ENCODE measurements at regions of chrX and their contacts with region 1.

Region 1: DNA sequence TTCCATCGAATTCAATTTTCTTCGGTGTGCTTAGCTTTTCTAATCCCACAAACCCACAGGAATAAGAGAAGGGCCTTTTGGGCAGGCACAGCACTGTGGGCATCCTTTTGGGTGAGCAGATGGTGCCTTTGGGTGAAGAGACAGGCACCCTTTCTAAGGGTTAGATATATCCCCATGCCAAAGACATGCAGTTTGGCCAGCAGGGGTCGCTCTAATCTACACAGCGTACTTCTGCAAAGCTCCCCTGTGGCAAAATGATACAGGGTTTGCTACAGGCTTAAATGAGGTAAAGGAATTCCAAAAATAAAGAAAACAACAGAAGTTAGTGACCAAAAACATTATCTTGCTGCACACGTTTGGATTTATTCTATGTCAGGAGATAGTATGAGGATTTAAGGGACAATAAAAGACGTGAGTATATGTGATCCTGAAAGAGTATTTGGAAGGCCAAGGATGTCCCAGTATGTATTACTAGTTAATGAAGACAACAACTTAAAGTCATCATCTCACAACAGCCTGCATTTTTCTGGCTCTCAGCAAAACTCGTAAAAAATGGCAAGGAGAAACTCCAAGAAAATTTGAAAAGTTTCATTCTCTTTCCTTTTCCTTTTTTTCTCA is 49.5 kb downstream of the PHEX start:
- DNase-seq: peak; percentile 75
- ATAC-seq: peak; percentile 78
- H3K4me3 ChIP-seq: no peak overlapping the region
- H3K27ac ChIP-seq: no peak overlapping the region
- H3K4me1 ChIP-seq: no peaks in the 10 kb centered on the region
- H3K27me3 ChIP-seq: no peaks in the 10 kb centered on the region
- CTCF ChIP-seq: peak; percentile 88

Region 2: DNA sequence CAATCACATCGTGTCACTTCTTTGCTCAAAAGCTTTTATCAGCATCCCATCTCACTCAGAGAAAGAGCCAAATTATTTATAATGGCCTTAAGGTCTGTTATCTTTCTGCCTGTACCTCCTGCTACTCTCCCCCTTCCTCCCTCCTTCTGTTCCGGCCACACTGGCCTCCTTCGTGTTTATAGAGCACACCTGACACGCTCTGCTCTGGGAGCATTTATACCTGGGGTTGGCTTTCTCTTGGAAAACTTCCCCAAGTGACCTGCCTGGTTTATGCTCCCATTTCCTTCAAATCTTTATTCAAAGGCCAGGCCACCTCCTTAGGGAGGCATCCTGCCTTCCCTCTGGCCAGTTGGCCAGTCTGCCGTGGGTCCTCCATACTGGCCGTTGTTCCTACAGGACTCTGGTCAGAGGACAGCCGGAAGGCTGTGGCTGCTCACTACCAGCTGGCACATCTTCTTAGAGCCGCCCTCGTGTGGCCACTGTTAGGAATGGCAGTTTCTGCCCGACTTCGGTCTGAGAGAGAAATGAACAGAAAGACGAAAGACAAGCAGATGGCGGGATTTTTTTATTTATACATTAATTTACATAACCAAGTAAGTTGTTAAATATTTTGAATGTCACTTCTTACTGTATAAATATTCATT is 111.0 kb after region 1 on chrX:
- CTCF ChIA-PET with region 1: no interaction called
- POLR2A ChIA-PET with region 1: no interaction called
- intact Hi-C with region 1: loop called (anchors 5 kb)
- DNase-seq: peak; percentile 78
- ATAC-seq: peak; percentile 90
- H3K4me3 ChIP-seq: no peak overlapping the region
- H3K27ac ChIP-seq: no peak overlapping the region
- H3K4me1 ChIP-seq: 0 out of 2 replicates have a peak, but pooled peaks cover 3% of the 10 kb centered on the region
- H3K27me3 ChIP-seq: no peaks in the 10 kb centered on the region
- CTCF ChIP-seq: peak; percentile 80

Measured in PC-3 (cell line).